Sigmoid colon (tissue), 7 donors: ENCODE measurements at regions of chr12 and their contacts with region 1.

Region 1: DNA sequence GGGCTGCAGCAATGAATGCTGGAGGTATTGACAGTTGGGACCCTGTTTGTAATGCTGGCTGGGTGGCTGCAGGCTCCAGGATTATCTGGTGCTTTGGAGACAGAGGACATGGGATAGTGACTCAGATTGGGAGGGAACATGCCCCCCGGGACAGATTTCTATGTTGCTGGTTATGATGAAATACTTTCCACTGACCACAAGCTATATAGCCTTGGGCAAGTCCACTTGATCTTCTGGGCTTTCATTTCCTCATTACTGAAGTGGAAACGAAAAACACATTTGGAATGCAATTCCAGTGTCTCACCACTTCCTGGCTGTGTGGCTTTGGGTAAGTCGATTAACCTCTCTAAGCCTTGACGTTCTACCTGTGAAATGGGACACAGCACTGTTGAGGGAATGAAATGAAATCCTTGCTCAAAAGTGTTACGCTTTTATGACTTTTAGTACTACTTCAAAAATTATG is 6.3 kb upstream of the TPCN1 start:
- DNase-seq: peak; percentile 91
- H3K4me3 ChIP-seq: no peak overlapping the region
- H3K27ac ChIP-seq: peak overlapping the region; percentile 17 to 46 (median 22)
- H3K4me1 ChIP-seq: no peaks in the 10 kb centered on the region
- H3K27me3 ChIP-seq: no peaks in the 10 kb centered on the region
- CTCF ChIP-seq: no peak
- EP300 ChIP-seq: peak in 2 of 4 donors; percentile 40 to 74
- POLR2A ChIP-seq: no peak

Region 2: DNA sequence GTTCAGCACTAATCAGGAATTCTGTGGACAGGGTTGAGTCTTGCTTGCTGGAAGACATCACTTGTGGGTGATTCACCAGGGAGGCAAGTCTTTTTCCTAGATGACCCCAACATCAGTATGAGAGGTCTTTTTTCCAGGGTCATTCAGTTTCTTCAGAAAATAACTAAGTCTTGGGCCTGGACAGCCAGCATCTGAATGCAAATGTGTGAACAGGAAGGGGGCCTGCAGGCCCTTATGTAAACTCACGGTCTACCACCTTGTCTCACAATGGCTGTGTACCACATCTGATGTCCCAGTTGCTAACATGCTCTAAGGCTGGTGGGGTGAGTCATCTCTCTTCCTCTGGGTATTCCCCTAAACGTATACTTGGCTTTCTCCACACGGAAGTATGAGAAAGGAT is 912.0 kb before region 1 on chr12:
- intact Hi-C with region 1: loop called (anchors 10 kb)
- DNase-seq: no peak
- H3K4me3 ChIP-seq: no peak overlapping the region
- H3K27ac ChIP-seq: no peak overlapping the region
- H3K4me1 ChIP-seq: no peaks in the 10 kb centered on the region
- H3K27me3 ChIP-seq: no peaks in the 10 kb centered on the region
- CTCF ChIP-seq: no peak
- EP300 ChIP-seq: no peak
- POLR2A ChIP-seq: no peak